Sigmoid colon (tissue), 7 donors: ENCODE measurements at regions of chr17 and their contacts with region 1.

Region 1: DNA sequence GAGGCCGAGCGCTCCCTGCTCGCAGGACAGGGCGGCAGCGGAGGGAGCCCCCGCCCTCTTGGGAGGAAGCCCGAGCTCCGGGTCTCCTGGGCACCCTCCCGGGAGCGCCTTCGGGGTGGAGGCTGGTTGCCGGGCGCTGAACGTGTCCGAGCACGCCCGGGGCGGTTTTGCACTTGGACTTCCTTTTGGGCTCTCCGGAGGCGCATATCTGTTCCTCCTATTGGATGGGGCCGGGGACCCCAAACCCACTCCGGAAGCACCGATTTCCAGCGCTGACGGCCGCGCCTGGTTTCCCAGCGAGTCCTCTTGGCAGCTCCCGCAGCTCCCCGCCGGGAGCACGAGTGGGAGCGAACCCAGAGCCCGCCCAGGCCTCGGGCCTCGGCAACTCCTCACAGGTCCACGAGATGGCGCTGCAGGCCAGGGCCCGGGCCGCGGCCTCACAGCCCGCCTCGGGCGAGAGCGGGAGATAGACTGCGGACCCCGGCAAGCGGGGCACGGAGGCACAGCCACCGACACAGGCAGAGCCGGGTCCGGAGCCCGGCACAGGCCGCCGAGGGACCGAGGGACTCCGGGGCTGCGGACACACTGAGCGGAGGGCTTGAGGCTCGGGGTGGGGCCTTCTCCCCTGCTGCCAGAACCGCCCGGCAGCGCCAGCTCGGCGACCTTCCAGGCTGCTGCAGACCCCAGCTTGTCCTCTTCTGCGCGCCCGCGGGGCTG is 12.7 kb downstream of the TBX2 start:
- DNase-seq: peak; percentile 90
- H3K4me3 ChIP-seq: peak overlapping the region; percentile 29 to 60 (median 53)
- H3K27ac ChIP-seq: peak overlapping the region; percentile 46 to 91 (median 63)
- H3K4me1 ChIP-seq: peaks cover 0 to 57% (median 54%) of the 10 kb centered on the region in 4 donors
- H3K27me3 ChIP-seq: peaks cover 33 to 63% (median 46%) of the 10 kb centered on the region in 3 donors
- CTCF ChIP-seq: peak; percentile 84 to 99 (median 94)
- EP300 ChIP-seq: no peak
- POLR2A ChIP-seq: no peak

Region 2: GRCh38 chr17:60720763-60721531 is 691.4 kb before region 1 on chr17:
- intact Hi-C with region 1: loop called (anchors 5 kb)
- DNase-seq: no peak
- H3K4me3 ChIP-seq: no peak overlapping the region
- H3K27ac ChIP-seq: no peak overlapping the region
- H3K4me1 ChIP-seq: peaks cover 0 to 3% (median 0%) of the 10 kb centered on the region in 4 donors
- H3K27me3 ChIP-seq: no peaks in the 10 kb centered on the region
- CTCF ChIP-seq: peak; percentile 49 to 86 (median 61)
- EP300 ChIP-seq: no peak
- POLR2A ChIP-seq: no peak

Region 3: GRCh38 chr17:61551255-61551742 is 139.0 kb after region 1 on chr17:
- intact Hi-C with region 1: loop called (anchors 5 kb)
- DNase-seq: no peak
- H3K4me3 ChIP-seq: no peak overlapping the region
- H3K27ac ChIP-seq: no peak overlapping the region
- H3K4me1 ChIP-seq: no peaks in the 10 kb centered on the region
- H3K27me3 ChIP-seq: peaks cover 0 to 6% (median 0%) of the 10 kb centered on the region in 3 donors
- CTCF ChIP-seq: peak in 3 of 4 experiments; percentile 48 to 57 (median 49)
- EP300 ChIP-seq: no peak
- POLR2A ChIP-seq: no peak

Region 4: GRCh38 chr17:61568219-61569072 is 156.1 kb after region 1 on chr17:
- intact Hi-C with region 1: no loop called
- DNase-seq: no peak
- H3K4me3 ChIP-seq: no peak overlapping the region
- H3K27ac ChIP-seq: no peak overlapping the region
- H3K4me1 ChIP-seq: no peaks in the 10 kb centered on the region
- H3K27me3 ChIP-seq: no peaks in the 10 kb centered on the region
- CTCF ChIP-seq: no peak
- EP300 ChIP-seq: no peak
- POLR2A ChIP-seq: no peak

Region 5: GRCh38 chr17:61837175-61838051 is 425.1 kb after region 1 on chr17:
- intact Hi-C with region 1: loop called (anchors 5 kb)
- DNase-seq: no peak
- H3K4me3 ChIP-seq: no peak overlapping the region
- H3K27ac ChIP-seq: no peak overlapping the region
- H3K4me1 ChIP-seq: no peaks in the 10 kb centered on the region
- H3K27me3 ChIP-seq: no peaks in the 10 kb centered on the region
- CTCF ChIP-seq: peak in 3 of 4 experiments; percentile 9 to 34 (median 33)
- EP300 ChIP-seq: no peak
- POLR2A ChIP-seq: no peak

Region 6: GRCh38 chr17:61862975-61863800 is 450.9 kb after region 1 on chr17 and contains the start of gene BRIP1:
- intact Hi-C with region 1: loop called (anchors 10 kb)
- DNase-seq: peak; percentile 95
- H3K4me3 ChIP-seq: peak within 1 kb of the TSS; percentile 57 to 67 (median 65)
- H3K27ac ChIP-seq: peak within 1 kb of the TSS; percentile 71 to 80 (median 77)
- H3K4me1 ChIP-seq: peaks cover 0 to 12% (median 5%) of the 10 kb centered on the region in 4 donors
- H3K27me3 ChIP-seq: no peaks in the 10 kb centered on the region
- CTCF ChIP-seq: no peak
- EP300 ChIP-seq: no peak
- POLR2A ChIP-seq: no peak
- total RNA-seq, gene BRIP1: 0.27 to 0.55 (median 0.36) TPM in 3 of 4 donors, not detected in the other